ENCODE measurements at regions of chr2 and their contacts with region 1.

Region 1: DNA sequence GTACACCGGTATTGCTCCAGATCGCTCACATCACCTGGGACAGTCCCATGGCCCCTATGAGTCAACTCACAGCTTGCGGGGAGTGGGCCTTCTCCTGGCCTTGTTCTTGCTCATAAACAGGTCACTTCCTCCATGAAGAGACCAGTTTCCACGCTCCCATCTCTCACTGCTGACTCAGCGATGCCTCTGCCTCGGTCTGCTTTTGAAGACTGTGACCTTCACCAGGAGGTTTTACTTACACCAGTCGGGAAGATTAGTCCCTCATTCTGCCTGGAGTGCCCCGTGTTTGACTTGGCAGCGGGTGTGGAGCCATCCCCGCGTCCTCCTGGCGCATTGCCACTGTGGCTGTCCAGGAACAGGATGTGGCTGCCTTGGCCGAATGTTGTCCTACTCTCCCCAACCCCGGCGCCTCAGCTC is 159.8 kb downstream of the RHBDD1 start:
- DNase-seq: peak in 1 of 2 donors; percentile 13
- H3K4me3 ChIP-seq: no peak overlapping the region
- H3K27ac ChIP-seq: no peak overlapping the region
- H3K4me1 ChIP-seq: no peaks in the 10 kb centered on the region
- H3K27me3 ChIP-seq: no peaks in the 10 kb centered on the region
- CTCF ChIP-seq: no peak
- POLR2A ChIP-seq: no peak

Region 2: DNA sequence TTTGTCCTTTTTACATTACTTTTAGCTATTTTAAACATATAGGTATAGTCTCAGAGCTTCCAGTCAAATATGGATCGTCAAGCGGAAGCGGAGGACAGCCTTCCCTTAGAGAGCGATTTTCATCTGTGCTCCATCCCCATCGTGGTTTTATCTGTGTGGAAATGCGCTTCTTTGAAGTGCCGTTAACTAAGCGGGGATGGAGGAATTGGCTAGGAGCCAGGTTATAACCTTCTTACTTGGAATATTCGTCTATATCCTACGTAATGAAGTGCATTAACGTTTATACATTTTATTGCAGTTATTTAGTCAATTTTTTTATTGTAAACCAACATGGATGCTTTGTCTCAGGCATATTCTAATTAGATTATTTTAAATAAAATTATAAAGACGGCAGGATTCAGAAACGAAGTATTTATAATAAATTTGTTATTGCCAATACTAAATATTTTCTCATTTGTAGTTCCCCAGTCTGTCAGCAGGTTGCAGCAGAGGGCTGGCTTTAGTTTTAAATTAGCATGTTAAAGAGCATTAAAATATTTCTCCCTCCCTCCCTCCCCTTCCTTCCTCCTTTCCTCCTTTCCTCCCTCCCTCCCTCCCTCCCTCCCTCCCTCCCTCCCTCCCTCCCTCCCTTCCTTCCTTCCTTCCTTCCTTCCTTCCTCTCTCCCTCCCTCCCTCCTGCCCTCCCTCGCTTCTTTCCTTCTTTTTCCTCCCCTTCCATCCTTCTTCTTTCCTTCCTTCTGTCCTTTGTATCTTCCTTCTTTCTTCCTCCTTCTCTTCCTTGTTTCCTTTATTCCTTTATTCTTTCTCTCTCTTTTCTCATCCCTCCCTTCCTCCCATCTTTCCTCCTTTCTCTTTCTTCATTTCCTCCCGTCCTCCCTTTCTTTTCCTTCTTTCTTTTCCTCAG is 1872.8 kb before region 1 on chr2:
- intact Hi-C with region 1: loop called (anchors 10 kb)
- DNase-seq: peak in 1 of 2 donors; percentile 7
- H3K4me3 ChIP-seq: no peak overlapping the region
- H3K27ac ChIP-seq: no peak overlapping the region
- H3K4me1 ChIP-seq: no peaks in the 10 kb centered on the region
- H3K27me3 ChIP-seq: no peaks in the 10 kb centered on the region
- CTCF ChIP-seq: peak in 5 of 6 experiments; percentile 24 to 59 (median 36)
- POLR2A ChIP-seq: no peak

Region 3: GRCh38 chr2:226791487-226792081 is 204.0 kb before region 1 on chr2:
- intact Hi-C with region 1: no loop called
- DNase-seq: peak; percentile 92 to 93
- H3K4me3 ChIP-seq: peak overlapping the region; percentile 33 to 76 (median 39)
- H3K27ac ChIP-seq: peak overlapping the region; percentile 84 to 98 (median 94)
- H3K4me1 ChIP-seq: peaks cover 33 to 41% of the 10 kb centered on the region in 2 donors
- H3K27me3 ChIP-seq: no peaks in the 10 kb centered on the region
- CTCF ChIP-seq: peak in 4 of 6 experiments; percentile 38 to 77 (median 62)
- POLR2A ChIP-seq: peak in 1 of 2 donors; percentile 77

Region 4: DNA sequence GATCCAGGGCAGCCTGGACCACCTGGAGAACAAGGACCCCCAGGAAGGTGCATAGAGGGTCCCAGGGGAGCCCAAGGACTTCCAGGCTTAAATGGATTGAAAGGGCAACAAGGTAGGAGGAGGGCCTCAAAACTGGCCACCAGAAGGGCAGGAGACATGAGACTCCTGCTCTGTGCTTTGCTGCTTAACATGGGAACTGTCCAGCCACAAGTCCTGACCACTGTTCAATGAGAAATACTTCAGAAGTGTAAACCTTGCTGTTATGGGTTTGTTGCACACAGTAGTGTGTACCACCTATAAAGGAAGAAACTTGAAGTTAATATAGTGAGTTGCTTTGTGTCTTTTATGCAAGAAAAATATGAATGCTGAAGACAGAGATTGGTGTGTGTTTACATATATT is 285.3 kb after region 1 on chr2:
- intact Hi-C with region 1: no loop called
- DNase-seq: no peak
- H3K4me3 ChIP-seq: no peak overlapping the region
- H3K27ac ChIP-seq: no peak overlapping the region
- H3K4me1 ChIP-seq: no peaks in the 10 kb centered on the region
- H3K27me3 ChIP-seq: no peaks in the 10 kb centered on the region
- CTCF ChIP-seq: no peak
- POLR2A ChIP-seq: no peak

Measured in thyroid gland (tissue), 4 donors.